HEK293T (cell line): ENCODE measurements at regions of chr4 and their contacts with region 1.

Region 1: GRCh38 chr4:56937262-56937661 is 29.6 kb downstream of the REST start:
- DNase-seq: no peak

Region 2: GRCh38 chr4:55378617-55379463 is 1558.4 kb before region 1 on chr4:
- CTCF ChIA-PET with region 1: no interaction called
- POLR2A ChIA-PET with region 1: no interaction called
- DNase-seq: no peak

Region 3: DNA sequence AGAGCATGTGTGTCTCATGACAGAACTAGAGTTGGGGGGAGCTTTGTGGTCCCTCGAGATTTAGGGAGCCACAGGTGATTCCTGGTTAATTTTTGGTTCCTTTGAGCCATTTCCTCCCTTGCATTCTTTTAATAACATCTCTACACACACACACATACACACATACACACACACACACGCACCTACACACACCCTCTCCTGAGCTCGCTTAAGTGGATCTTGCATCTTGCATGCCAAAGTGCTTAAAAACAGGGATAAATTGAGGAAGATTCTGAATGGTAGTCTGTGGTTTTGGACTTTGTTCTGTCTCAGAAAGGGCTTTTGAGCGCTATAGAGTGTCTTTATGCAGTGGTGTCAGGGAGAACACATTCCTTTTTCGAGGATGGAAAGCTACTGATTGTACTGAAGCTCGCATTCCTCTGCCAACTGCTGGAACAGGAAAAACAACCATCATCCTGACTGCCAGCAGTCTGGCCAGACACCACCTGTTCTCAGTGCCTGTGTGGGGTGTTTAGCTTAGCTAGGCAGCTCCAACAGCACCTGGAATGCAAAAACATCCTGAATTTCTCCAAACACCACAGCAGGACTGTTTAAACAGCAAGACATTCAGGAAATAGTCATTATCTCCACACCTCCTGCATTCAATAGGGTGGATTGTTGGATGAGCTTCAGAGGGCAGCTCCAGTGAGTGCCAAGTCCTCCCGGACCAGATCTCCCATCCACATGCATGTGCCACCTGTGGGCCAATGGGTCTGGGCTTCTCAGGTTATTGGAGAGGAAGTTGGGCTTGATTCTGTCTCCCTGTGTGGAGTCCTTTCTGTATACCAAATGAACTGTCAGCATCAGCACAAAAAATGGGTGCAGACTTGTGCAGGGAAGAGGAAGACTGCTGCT is 194.8 kb after region 1 on chr4:
- CTCF ChIA-PET with region 1: interaction called, 12 read pairs
- POLR2A ChIA-PET with region 1: no interaction called
- DNase-seq: no peak